ENCODE measurements at regions of chr4 and their contacts with region 1.

Region 1: DNA sequence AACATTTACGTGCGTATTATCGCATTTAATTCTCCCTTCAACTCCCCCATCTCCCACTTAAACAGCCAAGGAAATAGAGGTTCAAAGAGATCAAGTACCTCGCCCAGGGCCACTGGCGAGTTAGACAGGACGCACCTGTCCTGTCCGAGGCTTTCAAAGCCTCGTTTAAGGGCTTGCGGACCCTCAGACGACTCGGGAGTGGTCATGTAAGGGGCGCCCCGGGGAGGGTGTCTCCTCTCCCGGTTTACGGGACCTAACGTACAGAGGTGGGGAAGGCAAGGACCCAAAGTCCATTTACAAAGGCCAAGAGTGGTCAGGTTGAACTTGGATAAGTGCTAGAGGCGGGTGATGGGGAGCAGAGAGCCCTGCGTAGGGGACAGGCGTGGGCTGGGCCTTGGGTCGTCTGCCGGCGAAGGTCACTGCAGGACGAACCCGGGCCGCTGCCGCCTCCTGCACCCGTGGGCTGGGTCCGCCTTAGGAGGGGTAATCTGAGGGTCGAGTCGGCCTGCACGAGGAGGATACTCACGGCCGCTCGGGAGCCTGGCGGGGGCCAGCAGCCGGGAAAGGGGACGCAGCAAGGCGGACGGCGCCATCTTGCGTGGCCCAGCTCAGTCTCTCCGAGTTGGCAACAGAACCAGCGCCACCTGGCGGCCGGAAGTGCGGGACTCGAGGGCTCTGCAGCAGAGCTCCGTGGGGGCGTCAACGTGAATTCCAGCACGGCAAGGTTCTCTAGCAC is 5.9 kb upstream of the NAA15 start:
- DNase-seq: peak; percentile 97 to 100
- H3K4me3 ChIP-seq: peak overlapping the region; percentile 89
- CTCF ChIP-seq: peak in 2 of 3 donors; percentile 42 to 82
- POLR2A ChIP-seq: no peak

Region 2: DNA sequence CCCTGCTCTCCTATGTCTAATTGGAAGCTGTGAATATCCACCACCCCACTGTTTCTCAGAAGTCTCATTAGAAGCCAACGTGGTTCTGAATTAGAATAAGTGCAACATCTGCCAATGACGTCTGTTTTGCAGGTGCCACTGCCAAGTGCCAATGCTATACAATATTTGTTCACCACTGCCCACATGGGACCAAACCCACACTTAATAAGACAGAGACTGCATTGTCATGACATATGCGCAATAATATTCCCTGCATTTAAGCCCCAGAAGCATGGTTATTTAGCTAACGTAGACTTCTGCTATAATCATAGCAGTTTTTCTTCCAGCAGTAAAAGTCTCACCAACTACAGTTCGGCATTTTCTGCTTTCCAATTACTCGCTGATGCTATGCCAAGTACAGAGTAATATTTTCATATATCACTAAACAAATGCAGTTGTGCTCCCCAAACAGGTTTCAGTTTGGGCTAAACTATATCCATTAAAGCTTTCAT is 1500.6 kb before region 1 on chr4:
- intact Hi-C with region 1: no loop called
- DNase-seq: no peak
- H3K4me3 ChIP-seq: no peak overlapping the region
- CTCF ChIP-seq: no peak
- POLR2A ChIP-seq: no peak

Region 3: GRCh38 chr4:138217567-138217966 is 1077.8 kb before region 1 on chr4:
- intact Hi-C with region 1: no loop called
- DNase-seq: no peak
- H3K4me3 ChIP-seq: no peak overlapping the region
- CTCF ChIP-seq: no peak
- POLR2A ChIP-seq: no peak

Region 4: DNA sequence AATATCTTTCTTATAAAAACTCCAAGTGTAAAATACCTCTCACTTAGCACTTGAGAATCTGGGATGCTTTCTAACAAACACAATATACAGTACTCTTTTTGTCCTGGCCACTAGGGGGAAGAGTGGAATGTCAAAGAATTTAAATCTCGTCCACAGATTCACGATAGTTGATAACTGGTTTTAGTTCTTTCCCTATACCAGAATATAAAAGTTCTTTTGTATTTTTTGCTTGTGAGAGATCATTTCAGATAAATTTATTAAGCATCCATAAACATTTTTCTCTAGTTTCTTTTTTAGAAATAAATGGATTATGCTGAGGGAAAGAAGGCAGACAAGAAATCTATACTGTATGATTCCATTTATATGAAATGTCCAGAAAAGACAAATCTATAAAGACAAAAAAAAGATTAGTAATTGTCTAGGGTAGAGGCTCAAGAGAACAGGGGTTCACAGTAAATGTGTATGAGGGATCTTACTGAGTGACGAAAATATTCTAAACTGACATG is 65.8 kb before region 1 on chr4:
- intact Hi-C with region 1: loop called (anchors 5 kb)
- DNase-seq: no peak
- H3K4me3 ChIP-seq: no peak overlapping the region
- CTCF ChIP-seq: no peak
- POLR2A ChIP-seq: no peak

Measured in lower leg skin (tissue), 4 donors.